HEK293 (cell line): ENCODE measurements at regions of chr17 and their contacts with region 1.

Region 1: DNA sequence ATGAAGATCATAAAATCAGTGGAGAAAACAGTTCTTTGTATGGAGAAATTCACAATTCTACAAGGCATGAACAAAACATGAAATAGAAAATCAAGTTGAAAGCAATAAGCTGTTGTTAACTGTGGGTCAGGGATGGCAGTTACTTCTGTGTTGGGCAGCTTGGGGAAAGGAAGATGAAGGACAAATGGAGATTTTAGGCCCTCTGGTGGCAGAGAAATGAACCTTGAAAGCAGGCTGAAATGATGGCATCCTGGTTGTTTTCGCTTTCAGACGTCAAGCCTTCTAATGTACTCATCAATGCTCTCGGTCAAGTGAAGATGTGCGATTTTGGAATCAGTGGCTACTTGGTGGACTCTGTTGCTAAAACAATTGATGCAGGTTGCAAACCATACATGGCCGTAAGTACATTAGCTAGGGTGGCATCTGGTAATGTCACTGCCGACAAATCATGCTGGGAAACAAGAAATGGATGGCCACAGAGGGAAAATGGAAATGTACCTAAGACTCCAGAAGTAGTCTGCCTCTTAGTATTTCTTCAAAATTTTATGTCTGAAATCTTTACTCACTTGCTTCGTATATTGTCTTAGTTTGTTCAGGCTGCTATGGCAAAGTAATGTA is 108.9 kb downstream of the MAP2K6 start:
- H3K4me3 ChIP-seq: no peak overlapping the region
- H3K27ac ChIP-seq: no peak overlapping the region
- H3K4me1 ChIP-seq: no peaks in the 10 kb centered on the region
- CTCF ChIP-seq: peak; percentile 32

Region 2: DNA sequence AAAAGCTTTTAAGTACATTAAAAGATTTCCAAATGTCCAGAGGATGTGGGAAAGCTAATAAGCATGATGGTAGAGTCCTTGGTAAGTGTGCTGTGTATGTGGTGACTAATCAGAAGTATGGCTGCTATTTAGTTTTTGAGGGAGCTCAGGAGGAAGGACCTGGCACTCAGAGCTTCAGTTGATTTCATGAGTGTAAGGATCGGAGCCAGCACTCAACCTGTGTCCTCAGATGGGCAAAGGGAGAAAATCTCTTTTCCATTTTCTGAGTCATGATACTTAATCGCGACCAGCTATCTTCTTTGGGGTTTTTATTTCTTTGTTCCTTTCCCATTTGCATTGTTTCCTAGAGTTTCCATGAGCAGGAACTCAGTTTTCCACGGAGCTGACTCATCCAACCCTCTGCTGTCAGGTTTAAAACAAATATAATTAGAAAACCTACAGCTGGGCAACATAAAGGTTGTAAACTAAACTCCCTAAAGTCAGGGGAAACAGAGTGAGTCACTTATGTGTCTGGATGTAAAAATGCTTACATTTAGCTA is 16.5 kb after region 1 on chr17:
- CTCF ChIA-PET with region 1: interaction called, 35 read pairs
- POLR2A ChIA-PET with region 1: no interaction called
- H3K4me3 ChIP-seq: no peak overlapping the region
- H3K27ac ChIP-seq: peak overlapping the region; percentile 27
- H3K4me1 ChIP-seq: peaks cover 7% of the 10 kb centered on the region
- CTCF ChIP-seq: no peak

Region 3: DNA sequence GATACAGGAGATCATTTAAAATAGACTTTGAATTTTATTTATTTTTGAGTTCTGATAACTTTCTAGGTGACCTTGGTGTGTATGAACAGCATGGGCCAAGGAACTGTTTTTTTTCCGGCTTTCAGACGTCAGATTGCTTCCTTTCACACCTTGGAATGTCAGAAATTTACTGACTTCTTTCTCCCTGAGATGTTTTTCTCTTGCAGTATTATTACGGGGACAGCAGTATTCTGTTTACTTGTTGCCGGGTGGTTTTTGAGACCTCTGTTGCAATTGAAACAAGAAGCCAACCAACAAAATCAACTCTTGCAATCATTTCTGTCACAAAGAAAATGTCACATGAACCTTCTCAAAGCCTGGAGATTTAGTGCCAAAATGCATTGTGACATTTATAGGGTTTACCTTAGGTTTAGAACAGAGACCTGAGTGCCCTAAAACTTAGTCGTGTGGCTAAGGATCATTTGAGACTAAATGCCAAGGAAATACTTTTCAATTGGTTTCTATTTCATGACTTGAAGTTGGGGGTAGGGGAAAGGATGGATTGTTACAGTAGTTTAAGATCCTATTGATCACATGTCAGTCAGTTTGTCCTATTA is 65.5 kb after region 1 on chr17:
- CTCF ChIA-PET with region 1: no interaction called
- POLR2A ChIA-PET with region 1: no interaction called
- H3K4me3 ChIP-seq: no peak overlapping the region
- H3K27ac ChIP-seq: no peak overlapping the region
- H3K4me1 ChIP-seq: peaks cover 10% of the 10 kb centered on the region
- CTCF ChIP-seq: no peak

Region 4: DNA sequence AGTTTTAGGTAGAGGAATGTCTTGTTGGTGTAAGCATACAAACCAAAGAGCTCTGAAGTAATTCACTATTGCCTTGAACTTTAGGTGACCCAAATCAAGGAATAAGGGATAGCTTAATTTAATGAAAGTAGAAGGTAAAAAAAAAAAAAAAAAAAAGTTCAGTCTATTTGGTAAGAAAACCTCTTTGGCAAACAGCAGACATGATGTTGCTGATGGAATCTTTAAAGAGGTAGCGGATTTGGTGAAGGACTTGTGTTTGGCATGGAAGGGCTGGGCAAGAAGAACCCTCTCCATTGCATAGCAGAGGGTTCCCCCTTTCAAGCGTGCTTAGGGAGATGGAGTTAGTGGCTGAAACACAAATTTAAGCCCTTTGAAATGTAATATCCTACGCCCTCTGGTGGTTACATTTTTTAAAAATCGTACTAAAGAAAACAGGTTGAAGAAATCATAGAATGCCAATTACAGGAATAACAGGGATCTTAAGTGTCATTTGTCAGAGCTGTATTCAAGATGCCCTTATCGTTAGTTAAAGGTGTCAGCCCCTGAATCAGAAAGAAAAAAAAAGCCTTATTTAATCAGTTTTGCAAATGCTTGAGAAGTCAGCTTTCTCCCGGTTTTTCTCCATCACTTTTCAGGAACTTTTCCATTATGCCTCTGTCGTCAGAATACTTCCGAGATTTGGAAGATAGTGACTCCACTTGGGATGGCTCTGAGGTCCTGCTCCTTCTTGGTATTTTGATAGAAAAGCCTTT is 1029.1 kb after region 1 on chr17:
- CTCF ChIA-PET with region 1: interaction called, 17 read pairs
- POLR2A ChIA-PET with region 1: no interaction called
- H3K4me3 ChIP-seq: no peak overlapping the region
- H3K27ac ChIP-seq: no peak overlapping the region
- H3K4me1 ChIP-seq: no peaks in the 10 kb centered on the region; the same call in 1 of the 2 replicates
- CTCF ChIP-seq: no peak